WTC11 (cell line): ENCODE measurements at regions of chr3 and their contacts with region 1.

Region 1: GRCh38 chr3:48194446-48195071 is 6.3 kb upstream of the CDC25A start:
- DNase-seq: peak; percentile 86
- ATAC-seq: peak; percentile 67
- H3K4me3 Mint-ChIP-seq: no peak overlapping the region
- H3K27ac Mint-ChIP-seq: no peak overlapping the region
- H3K4me1 Mint-ChIP-seq: peaks cover 34% of the 10 kb centered on the region
- H3K27me3 Mint-ChIP-seq: no peaks in the 10 kb centered on the region; the same call in 1 of the 2 replicates
- CTCF ChIP-seq: peak; percentile 76

Region 2: DNA sequence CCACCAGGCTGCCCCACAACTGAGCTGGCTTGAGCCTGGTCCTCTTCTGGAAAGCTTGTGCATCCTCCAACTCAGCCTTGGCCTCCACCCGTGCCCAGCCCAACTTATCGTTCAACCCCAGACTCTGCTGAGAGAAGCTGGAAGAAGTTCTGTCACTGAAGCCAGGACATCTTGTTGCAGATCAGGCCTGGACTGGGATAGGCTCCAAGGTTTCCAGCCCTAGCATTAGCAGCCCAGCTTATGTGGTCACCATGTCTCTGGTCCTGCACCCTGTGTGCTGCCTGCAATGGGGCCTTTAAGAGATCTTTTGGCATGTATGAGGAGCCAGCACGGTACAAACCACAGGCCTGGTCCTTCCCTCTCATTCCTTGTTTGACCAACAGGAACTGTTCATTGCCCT is 13.5 kb after region 1 on chr3:
- CTCF ChIA-PET with region 1: interaction called, 13 read pairs
- POLR2A ChIA-PET with region 1: no interaction called
- DNase-seq: no peak
- ATAC-seq: no peak
- H3K4me3 Mint-ChIP-seq: no peak overlapping the region
- H3K27ac Mint-ChIP-seq: no peak overlapping the region
- H3K4me1 Mint-ChIP-seq: peaks cover 1% of the 10 kb centered on the region
- H3K27me3 Mint-ChIP-seq: peaks cover 17% of the 10 kb centered on the region
- CTCF ChIP-seq: no peak

Region 3: GRCh38 chr3:48232734-48233133 is 38.2 kb after region 1 on chr3:
- CTCF ChIA-PET with region 1: interaction called, 13 read pairs
- POLR2A ChIA-PET with region 1: no interaction called
- DNase-seq: peak; percentile 86
- ATAC-seq: peak; percentile 99
- H3K4me3 Mint-ChIP-seq: no peak overlapping the region
- H3K27ac Mint-ChIP-seq: 0 out of 2 replicates have a peak overlapping the region, but pooled peaks have one; percentile 16
- H3K4me1 Mint-ChIP-seq: peaks cover 15% of the 10 kb centered on the region
- H3K27me3 Mint-ChIP-seq: peaks cover 4% of the 10 kb centered on the region; the same call in 1 of the 2 replicates
- CTCF ChIP-seq: peak; percentile 32; the same call in 1 of the 2 replicates

Region 4: GRCh38 chr3:48240711-48241491 is 46.3 kb after region 1 on chr3 and contains the start of gene ZNF589:
- CTCF ChIA-PET with region 1: interaction called, 18 read pairs
- POLR2A ChIA-PET with region 1: interaction called, 3 read pairs
- DNase-seq: peak; percentile 95
- ATAC-seq: peak; percentile 87
- H3K4me3 Mint-ChIP-seq: peak within 1 kb of the TSS; percentile 86
- H3K27ac Mint-ChIP-seq: peak within 1 kb of the TSS; percentile 90
- H3K4me1 Mint-ChIP-seq: peaks cover 41% of the 10 kb centered on the region
- H3K27me3 Mint-ChIP-seq: no peaks in the 10 kb centered on the region
- CTCF ChIP-seq: no peak
- total RNA-seq, gene ZNF589: 96.1 to 104 TPM (median 102 TPM) in 3 replicates

Region 5: GRCh38 chr3:48394391-48394790 is 199.8 kb after region 1 on chr3:
- CTCF ChIA-PET with region 1: interaction called, 29 read pairs
- POLR2A ChIA-PET with region 1: no interaction called
- DNase-seq: no peak
- ATAC-seq: no peak
- H3K4me3 Mint-ChIP-seq: no peak overlapping the region
- H3K27ac Mint-ChIP-seq: no peak overlapping the region
- H3K4me1 Mint-ChIP-seq: peaks cover 9% of the 10 kb centered on the region
- H3K27me3 Mint-ChIP-seq: peaks cover 16% of the 10 kb centered on the region
- CTCF ChIP-seq: no peak

Region 6: DNA sequence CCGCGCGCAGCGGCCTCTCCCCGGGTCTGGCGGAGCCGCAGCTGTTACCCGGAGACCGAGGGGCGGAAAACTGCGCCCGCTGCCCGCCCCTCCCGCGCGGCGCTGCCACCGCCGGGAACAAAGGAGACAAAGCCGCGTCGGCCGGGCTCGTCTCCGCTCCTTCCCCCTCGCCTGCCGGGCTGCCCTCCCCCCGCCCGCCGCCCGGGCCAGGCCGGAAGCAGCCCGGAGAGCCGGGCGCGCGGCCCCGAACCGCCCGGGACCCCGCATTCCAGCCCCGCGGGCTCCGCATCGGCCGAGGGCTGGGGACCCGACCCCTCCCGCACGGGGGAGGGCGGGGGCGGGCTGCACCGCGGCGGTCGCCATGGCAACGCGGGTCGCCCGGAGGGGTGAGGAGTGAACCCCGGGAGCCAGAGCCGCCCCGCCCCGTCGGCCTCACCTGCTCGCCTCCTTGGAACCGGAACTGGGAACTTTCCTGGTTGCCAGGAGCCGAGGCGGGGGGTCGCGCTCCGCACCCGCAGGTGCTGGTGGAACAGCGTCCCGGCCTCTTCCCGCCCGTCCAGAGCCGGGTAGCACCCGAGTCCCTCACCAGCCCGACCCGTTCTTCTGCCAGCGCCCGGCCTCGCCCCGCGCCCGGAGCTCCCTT is 234.9 kb after region 1 on chr3:
- CTCF ChIA-PET with region 1: interaction called, 21 read pairs
- POLR2A ChIA-PET with region 1: no interaction called
- DNase-seq: peak; percentile 86
- ATAC-seq: peak; percentile 16
- H3K4me3 Mint-ChIP-seq: peak overlapping the region; percentile 87
- H3K27ac Mint-ChIP-seq: peak overlapping the region; percentile 87
- H3K4me1 Mint-ChIP-seq: peaks cover 59% of the 10 kb centered on the region
- H3K27me3 Mint-ChIP-seq: no peaks in the 10 kb centered on the region
- CTCF ChIP-seq: no peak

Region 7: GRCh38 chr3:48472915-48473616 is 278.5 kb after region 1 on chr3:
- CTCF ChIA-PET with region 1: no interaction called
- POLR2A ChIA-PET with region 1: no interaction called
- DNase-seq: peak; percentile 96
- ATAC-seq: peak; percentile 82
- H3K4me3 Mint-ChIP-seq: peak overlapping the region; percentile 91
- H3K27ac Mint-ChIP-seq: peak overlapping the region; percentile 99
- H3K4me1 Mint-ChIP-seq: peaks cover 30% of the 10 kb centered on the region
- H3K27me3 Mint-ChIP-seq: no peaks in the 10 kb centered on the region; the same call in none of the 2 replicates
- CTCF ChIP-seq: peak; percentile 45; the same call in 1 of the 2 replicates